H1 (cell line): ENCODE measurements at regions of chr17 and their contacts with region 1.

Region 1: DNA sequence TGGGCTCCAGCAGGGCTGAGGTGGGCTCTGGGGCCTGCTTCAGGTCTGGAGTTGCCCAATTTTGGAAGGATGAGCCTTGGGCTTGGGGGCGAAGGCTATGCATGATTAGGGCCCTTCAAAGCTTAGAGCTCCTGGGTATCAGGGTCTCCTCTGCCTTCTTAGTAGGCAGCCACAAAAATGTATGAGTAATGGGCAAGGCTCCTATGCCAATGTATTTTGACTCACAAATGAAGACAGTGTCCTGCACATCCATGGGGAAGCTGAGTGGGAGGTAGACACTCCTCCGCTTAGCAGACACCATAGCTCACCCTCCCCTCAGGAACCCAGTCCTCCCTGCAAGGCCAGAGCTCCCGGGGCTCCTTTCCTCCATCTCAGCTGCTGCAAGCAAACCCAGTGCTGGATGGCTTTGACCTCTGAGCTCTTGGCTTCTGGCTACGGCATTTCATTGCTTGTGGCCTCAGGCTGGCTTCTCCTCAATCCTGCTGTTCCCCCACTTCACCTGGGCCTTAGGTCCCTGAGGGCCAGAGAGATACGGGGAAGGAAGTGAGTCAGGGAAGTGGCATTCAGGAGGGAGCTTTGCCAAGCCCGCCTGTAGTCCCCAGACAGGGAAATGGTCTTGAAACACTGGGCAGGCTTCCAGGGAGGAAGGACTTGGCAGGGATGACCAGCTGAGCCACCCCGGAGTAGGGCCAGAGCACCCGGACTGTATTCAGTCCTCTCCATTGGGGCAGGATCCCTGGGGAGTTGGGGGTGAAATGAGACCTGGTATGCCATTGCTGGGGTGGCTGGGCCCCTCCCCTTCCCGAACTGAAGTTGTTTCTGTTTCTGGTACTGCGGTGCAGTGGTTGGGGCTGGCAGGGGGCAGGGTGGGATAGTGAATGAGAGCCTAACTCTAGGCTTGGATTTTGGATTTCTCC is 4.4 kb downstream of the ABCC3 start:
- DNase-seq: no peak
- H3K4me3 ChIP-seq: no peak overlapping the region
- H3K27ac ChIP-seq: no peak overlapping the region
- H3K4me1 ChIP-seq: peaks cover 0 to 11% (median 7%) of the 10 kb centered on the region in 4 experiments; a peak in 4 of 7 replicates
- H3K27me3 ChIP-seq: peaks cover 18 to 27% (median 27%) of the 10 kb centered on the region in 4 experiments
- CTCF ChIP-seq: no peak
- EP300 ChIP-seq: no peak
- POLR2A ChIP-seq: no peak
- RAD21 ChIP-seq: no peak

Region 2: GRCh38 chr17:50575581-50576210 is 63.4 kb before region 1 on chr17:
- CTCF ChIA-PET with region 1: interaction called, 12 read pairs
- POLR2A ChIA-PET with region 1: no interaction called
- DNase-seq: peak in 1 of 2 experiments; percentile 73
- H3K4me3 ChIP-seq: no peak overlapping the region
- H3K27ac ChIP-seq: no peak overlapping the region
- H3K4me1 ChIP-seq: peaks cover 0 to 8% (median 5%) of the 10 kb centered on the region in 4 experiments; a peak in 4 of 7 replicates
- H3K27me3 ChIP-seq: no peaks in the 10 kb centered on the region
- CTCF ChIP-seq: peak; percentile 29 to 36 (median 36); a peak in 3 of 4 replicates
- EP300 ChIP-seq: no peak
- POLR2A ChIP-seq: no peak
- RAD21 ChIP-seq: peak in 1 of 2 experiments; percentile 31; a peak in 3 of 4 replicates

Region 3: GRCh38 chr17:50649042-50649904 is 10.2 kb after region 1 on chr17:
- CTCF ChIA-PET with region 1: interaction called, 11 read pairs
- POLR2A ChIA-PET with region 1: interaction called, 7 read pairs
- DNase-seq: no peak
- H3K4me3 ChIP-seq: no peak overlapping the region
- H3K27ac ChIP-seq: no peak overlapping the region
- H3K4me1 ChIP-seq: no peaks in the 10 kb centered on the region
- H3K27me3 ChIP-seq: no peaks in the 10 kb centered on the region
- CTCF ChIP-seq: no peak
- EP300 ChIP-seq: no peak
- POLR2A ChIP-seq: no peak
- RAD21 ChIP-seq: no peak

Region 4: DNA sequence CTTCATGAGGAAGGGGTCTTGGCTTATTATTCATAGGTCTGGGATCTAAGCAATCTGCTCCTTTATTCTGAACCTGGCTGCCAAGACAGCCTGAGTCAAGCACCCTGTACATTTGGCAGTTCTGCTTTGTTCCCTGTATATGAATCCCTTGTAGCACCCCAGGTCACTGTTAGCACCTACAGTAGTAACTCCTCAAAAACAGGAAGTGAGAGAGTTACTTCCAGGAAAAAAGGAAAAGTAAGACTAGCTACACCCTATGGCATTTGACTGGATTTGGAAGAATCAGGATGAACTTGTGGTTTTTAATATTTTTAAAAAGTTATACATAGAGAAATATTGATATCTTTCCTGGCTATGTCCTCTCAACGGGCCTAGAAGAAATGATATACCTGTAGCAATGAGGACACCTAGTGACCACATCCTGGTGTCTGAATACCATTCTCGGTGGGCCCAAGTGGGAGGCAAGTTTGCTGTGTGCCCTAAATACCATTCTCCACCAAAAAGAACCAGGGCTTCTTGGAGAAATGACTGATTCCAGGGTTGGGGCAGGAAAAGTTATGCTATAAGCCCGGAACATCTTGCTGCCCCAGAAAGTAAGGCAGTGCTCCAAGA is 58.7 kb after region 1 on chr17:
- CTCF ChIA-PET with region 1: interaction called, 391 read pairs
- POLR2A ChIA-PET with region 1: no interaction called
- DNase-seq: no peak
- H3K4me3 ChIP-seq: no peak overlapping the region
- H3K27ac ChIP-seq: no peak overlapping the region
- H3K4me1 ChIP-seq: no peaks in the 10 kb centered on the region
- H3K27me3 ChIP-seq: no peaks in the 10 kb centered on the region
- CTCF ChIP-seq: peak in 2 of 3 experiments; percentile 11 to 12; a peak in 1 of 4 replicates
- EP300 ChIP-seq: no peak
- POLR2A ChIP-seq: no peak
- RAD21 ChIP-seq: peak; percentile 25 to 37; a peak in 3 of 4 replicates